GM12878 (cell line): ENCODE measurements at regions of chr18 and their contacts with region 1.

Region 1: GRCh38 chr18:12883684-12884405 is at the start of gene PTPN2:
- DNase-seq: peak; percentile 77
- ATAC-seq: peak; percentile 74
- H3K4me3 ChIP-seq: peak within 1 kb of the TSS; percentile 85
- H3K27ac ChIP-seq: peak within 1 kb of the TSS; percentile 97
- H3K4me1 ChIP-seq: peaks cover 36% of the 10 kb centered on the region
- H3K27me3 ChIP-seq: no peaks in the 10 kb centered on the region
- CTCF ChIP-seq: no peak
- EP300 ChIP-seq: peak in 1 of 2 experiments; percentile 56; a peak in 2 of 4 replicates
- POLR2A ChIP-seq: peak; percentile 98
- RAD21 ChIP-seq: no peak
- polyA plus RNA-seq, gene PTPN2: 54.9 to 57.9 TPM

Region 2: GRCh38 chr18:12376718-12377555 is 506.9 kb before region 1 on chr18 and contains the start of gene AFG3L2:
- CTCF ChIA-PET with region 1: no interaction called
- POLR2A ChIA-PET with region 1: interaction called, 3 read pairs
- RAD21 ChIA-PET with region 1: interaction called, 4 read pairs
- SMC1A ChIA-PET with region 1: no interaction called
- in situ Hi-C with region 1: no loop called
- intact Hi-C with region 1: loop called (anchors 10 kb)
- DNase-seq: peak; percentile 96
- ATAC-seq: peak; percentile 89
- H3K4me3 ChIP-seq: peak within 1 kb of the TSS; percentile 99
- H3K27ac ChIP-seq: peak within 1 kb of the TSS; percentile 93
- H3K4me1 ChIP-seq: peaks cover 3% of the 10 kb centered on the region; the same call in 1 of the 2 replicates
- H3K27me3 ChIP-seq: no peaks in the 10 kb centered on the region
- CTCF ChIP-seq: no peak
- EP300 ChIP-seq: 0 out of 4 replicates have a peak, but pooled peaks of 1 of the 2 experiments have one; percentile 26
- POLR2A ChIP-seq: peak; percentile 96
- RAD21 ChIP-seq: no peak
- polyA plus RNA-seq, gene AFG3L2: 21.0 to 21.6 TPM

Region 3: DNA sequence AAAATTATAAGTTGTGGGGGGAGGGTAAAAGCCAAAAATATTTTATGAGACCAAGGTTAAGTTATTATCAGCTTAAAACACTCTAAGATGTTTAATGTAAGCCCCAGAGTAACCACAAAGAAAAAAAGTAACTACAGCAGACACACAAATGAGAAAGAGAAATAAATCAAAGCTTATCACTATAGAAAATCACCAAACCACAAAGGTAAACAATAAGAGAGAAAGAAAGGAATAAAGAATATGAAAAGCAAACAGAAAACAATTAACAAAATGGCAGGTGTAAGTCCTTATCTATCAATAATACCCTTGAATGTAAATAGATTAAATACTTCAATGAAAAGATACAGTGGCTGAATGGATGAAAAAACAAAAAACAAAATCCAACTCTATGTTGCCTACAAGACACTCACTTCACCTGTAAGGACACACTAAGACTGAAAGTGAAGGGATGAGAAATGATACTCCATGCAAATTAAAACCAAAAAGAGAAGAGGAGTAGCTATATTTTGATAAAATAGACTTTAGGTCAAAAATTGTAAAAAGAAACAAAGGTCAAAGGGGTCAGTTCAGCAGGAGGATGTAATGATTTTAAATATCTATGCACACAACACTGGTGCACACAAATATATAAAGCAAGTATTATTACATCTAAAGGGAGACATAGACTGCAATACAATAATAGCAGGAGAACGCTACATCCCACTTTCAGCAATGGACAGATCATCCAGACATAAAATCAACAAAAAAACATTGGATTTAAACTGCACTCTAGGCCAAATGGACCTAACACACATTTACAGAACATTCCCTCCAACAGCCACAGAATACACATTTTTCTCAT is 80.5 kb before region 1 on chr18:
- CTCF ChIA-PET with region 1: interaction called, 4 read pairs
- POLR2A ChIA-PET with region 1: interaction called, 6 read pairs
- RAD21 ChIA-PET with region 1: interaction called, 4 read pairs
- SMC1A ChIA-PET with region 1: interaction called, 13 read pairs
- in situ Hi-C with region 1: no loop called
- intact Hi-C with region 1: no loop called
- DNase-seq: peak; percentile 19
- ATAC-seq: peak; percentile 84
- H3K4me3 ChIP-seq: no peak overlapping the region
- H3K27ac ChIP-seq: peak overlapping the region; percentile 39; the same call in 1 of the 2 replicates
- H3K4me1 ChIP-seq: peaks cover 14% of the 10 kb centered on the region
- H3K27me3 ChIP-seq: no peaks in the 10 kb centered on the region
- CTCF ChIP-seq: no peak
- EP300 ChIP-seq: no peak
- POLR2A ChIP-seq: no peak
- RAD21 ChIP-seq: no peak

Region 4: GRCh38 chr18:12843420-12844350 is 40.2 kb before region 1 on chr18:
- CTCF ChIA-PET with region 1: interaction called, 7 read pairs
- POLR2A ChIA-PET with region 1: interaction called, 62 read pairs
- RAD21 ChIA-PET with region 1: interaction called, 81 read pairs
- SMC1A ChIA-PET with region 1: interaction called, 52 read pairs
- in situ Hi-C with region 1: no loop called
- intact Hi-C with region 1: loop called (anchors 1 kb)
- DNase-seq: no peak
- ATAC-seq: peak; percentile 12; the same call in 2 of the 3 replicates
- H3K4me3 ChIP-seq: no peak overlapping the region
- H3K27ac ChIP-seq: peak overlapping the region; percentile 71
- H3K4me1 ChIP-seq: peaks cover 35% of the 10 kb centered on the region
- H3K27me3 ChIP-seq: no peaks in the 10 kb centered on the region
- CTCF ChIP-seq: no peak
- EP300 ChIP-seq: no peak
- POLR2A ChIP-seq: no peak
- RAD21 ChIP-seq: no peak

Region 5: GRCh38 chr18:12862467-12862866 is 21.4 kb before region 1 on chr18:
- CTCF ChIA-PET with region 1: interaction called, 9 read pairs
- POLR2A ChIA-PET with region 1: interaction called, 14 read pairs
- RAD21 ChIA-PET with region 1: interaction called, 6 read pairs
- SMC1A ChIA-PET with region 1: interaction called, 95 read pairs
- in situ Hi-C with region 1: no loop called
- intact Hi-C with region 1: no loop called
- DNase-seq: no peak
- ATAC-seq: no peak
- H3K4me3 ChIP-seq: no peak overlapping the region
- H3K27ac ChIP-seq: no peak overlapping the region
- H3K4me1 ChIP-seq: peaks cover 36% of the 10 kb centered on the region
- H3K27me3 ChIP-seq: no peaks in the 10 kb centered on the region
- CTCF ChIP-seq: no peak
- EP300 ChIP-seq: no peak
- POLR2A ChIP-seq: no peak
- RAD21 ChIP-seq: no peak

Region 6: DNA sequence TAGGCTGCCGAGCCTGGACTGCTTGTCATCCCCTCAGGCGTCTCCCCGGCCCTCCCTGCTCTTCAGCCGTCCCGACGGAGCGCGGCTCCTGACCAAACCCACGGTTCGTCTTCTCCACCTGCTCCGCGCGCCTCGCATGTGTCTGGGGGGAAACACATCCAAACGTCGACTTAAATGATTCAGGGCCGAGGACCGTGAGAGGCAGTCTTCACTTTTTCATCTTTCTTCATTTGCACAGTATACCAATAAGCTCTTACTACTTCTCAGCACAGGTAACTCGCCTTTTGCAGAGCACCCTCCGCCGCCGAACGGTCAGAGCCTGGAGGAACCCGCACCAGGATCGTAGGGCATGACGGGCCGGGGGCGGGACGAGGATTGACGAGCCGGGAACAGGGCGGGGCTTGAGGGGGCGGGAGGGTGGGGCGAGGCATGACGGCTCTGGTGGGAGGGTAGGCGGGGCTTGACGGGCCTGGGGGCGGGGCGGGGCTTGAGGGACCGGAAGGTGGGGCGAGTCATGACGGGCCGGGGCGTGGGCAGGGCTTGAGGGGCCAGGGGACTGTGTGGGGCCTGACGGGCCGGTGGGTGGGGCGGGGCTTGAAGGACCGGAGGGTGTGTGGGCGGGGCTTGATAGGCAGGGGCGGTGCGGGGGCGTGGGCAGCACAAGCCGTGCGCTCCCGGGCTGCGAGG is 63.7 kb after region 1 on chr18 and contains the start of gene SEH1L:
- CTCF ChIA-PET with region 1: interaction called, 3 read pairs
- POLR2A ChIA-PET with region 1: interaction called, 3 read pairs
- RAD21 ChIA-PET with region 1: interaction called, 4 read pairs
- SMC1A ChIA-PET with region 1: interaction called, 3 read pairs
- in situ Hi-C with region 1: no loop called
- intact Hi-C with region 1: loop called (anchors 5 kb)
- DNase-seq: peak; percentile 89
- ATAC-seq: peak; percentile 92
- H3K4me3 ChIP-seq: peak within 1 kb of the TSS; percentile 92
- H3K27ac ChIP-seq: peak within 1 kb of the TSS; percentile 87
- H3K4me1 ChIP-seq: peaks cover 4% of the 10 kb centered on the region; the same call in 1 of the 2 replicates
- H3K27me3 ChIP-seq: no peaks in the 10 kb centered on the region
- CTCF ChIP-seq: no peak
- EP300 ChIP-seq: no peak
- POLR2A ChIP-seq: 0 out of 2 replicates have a peak, but pooled peaks have one; percentile 7
- RAD21 ChIP-seq: no peak
- polyA plus RNA-seq, gene SEH1L: 27.5 to 52.4 TPM